ENCODE measurements at regions of chr6 and their contacts with region 1.

Region 1: DNA sequence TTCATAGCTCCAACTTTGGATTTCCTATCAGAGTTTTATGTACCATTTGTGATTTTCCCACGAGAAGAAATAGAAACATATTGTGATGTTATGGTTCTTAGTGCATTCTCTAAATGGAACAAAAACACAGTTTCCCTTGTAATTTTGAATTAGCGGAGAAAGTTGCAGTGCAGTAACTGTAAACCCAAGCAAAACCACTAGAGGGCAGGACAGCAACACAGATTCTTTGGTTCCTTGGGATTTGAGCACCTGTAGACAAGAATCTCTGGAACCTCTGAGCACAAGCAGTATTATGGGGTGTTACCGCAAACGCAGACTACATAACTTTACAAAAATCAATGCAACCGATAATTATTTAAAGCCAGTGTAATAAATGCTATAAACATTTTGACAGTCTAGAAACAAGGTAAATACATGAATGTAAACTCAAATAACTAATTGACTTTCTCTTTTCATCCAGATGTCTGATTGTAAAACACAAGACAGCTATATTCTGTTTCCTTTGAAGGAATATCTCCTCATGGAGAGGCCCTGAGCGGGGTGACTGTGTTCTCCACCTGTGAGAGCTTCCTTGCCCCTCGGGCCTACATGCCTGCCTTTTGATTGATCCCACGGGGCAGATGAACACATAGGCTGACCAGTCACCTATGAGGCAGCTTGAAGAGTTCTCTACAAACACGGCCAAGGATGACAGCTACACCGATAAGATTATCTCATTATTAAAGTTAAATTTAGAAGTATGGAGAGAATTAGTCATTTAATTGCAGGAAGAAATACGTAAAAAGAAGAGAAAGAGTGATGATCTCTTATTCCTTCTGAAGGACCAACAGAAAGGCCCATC is 67.5 kb upstream of the COL21A1 start:
- DNase-seq: no peak
- H3K4me3 ChIP-seq: no peak overlapping the region
- CTCF ChIP-seq: peak; percentile 75

Region 2: GRCh38 chr6:56329271-56330050 is 14.6 kb after region 1 on chr6:
- CTCF ChIA-PET with region 1: interaction called, 38 read pairs
- POLR2A ChIA-PET with region 1: no interaction called
- DNase-seq: no peak
- H3K4me3 ChIP-seq: no peak overlapping the region
- CTCF ChIP-seq: no peak

Region 3: GRCh38 chr6:56335726-56336125 is 20.8 kb after region 1 on chr6:
- CTCF ChIA-PET with region 1: interaction called, 13 read pairs
- POLR2A ChIA-PET with region 1: no interaction called
- DNase-seq: peak; percentile 60
- H3K4me3 ChIP-seq: no peak overlapping the region
- CTCF ChIP-seq: no peak

Region 4: DNA sequence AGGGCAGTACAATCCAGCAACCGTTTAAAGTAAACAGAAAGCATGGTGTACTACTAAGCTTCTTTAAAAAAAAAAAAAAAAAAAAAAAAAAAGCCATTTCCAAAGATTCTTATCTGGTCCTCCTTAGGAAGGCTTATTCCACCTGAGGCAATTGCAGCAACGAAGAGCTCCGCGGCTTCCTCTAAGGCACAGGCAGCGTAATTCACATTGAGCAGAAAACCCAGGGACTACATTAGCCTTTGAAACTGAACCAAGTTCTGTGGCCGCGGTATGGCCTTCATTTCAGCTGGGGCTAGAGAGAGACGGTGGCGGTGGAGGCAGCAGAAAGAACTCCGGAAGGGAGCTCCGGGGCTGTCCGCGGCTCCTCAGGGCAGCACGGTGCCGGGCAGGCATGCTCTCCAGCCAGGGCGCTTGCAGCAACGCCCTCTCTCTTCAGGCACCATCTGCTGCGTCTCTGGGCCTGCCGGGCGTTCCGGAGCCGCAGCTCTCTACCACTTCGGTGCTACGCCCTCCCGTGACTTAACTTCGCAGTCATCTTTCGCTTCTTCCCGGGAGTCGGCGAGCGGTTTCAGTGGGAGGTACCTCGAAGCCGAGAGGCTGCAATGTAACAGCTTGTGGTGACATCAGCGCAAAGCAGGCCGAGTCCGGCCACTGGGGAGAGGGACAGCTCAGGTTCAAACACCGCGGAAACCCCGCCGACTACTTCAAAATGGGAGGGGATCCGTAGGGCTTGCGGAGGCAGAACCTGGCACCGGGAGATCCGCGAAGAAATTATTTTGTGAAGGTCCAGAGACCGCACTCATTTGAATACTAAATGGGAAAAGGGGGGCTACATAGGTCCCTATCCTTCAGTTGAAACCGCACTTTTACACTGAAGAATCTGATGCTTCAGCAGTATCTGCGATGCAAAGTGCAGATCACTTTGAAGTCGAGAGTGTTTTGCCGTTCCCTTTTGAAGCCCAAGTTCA is 227.7 kb after region 1 on chr6:
- CTCF ChIA-PET with region 1: interaction called, 14 read pairs
- POLR2A ChIA-PET with region 1: no interaction called
- DNase-seq: peak; percentile 89
- H3K4me3 ChIP-seq: peak overlapping the region; percentile 63
- CTCF ChIP-seq: peak; percentile 31

Region 5: DNA sequence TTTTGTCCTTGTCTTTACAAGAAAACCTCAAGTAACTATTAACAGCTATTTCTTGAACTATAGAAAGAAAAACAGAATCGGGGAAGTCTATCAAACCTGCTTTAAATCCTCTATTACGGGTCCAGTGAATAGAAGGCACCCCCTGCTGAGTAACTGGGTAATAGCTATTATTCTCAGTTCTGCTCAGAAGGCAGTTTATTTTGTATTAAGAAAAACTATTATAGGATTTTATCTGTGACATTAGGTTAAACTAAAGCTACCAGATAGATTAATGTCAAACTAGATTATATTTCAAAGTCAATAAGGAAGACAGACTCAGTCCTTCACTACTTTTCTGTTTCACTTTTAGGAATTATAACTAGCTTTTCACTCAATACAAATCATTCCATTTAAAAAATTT is 234.1 kb after region 1 on chr6:
- CTCF ChIA-PET with region 1: interaction called, 14 read pairs
- POLR2A ChIA-PET with region 1: no interaction called
- DNase-seq: no peak
- H3K4me3 ChIP-seq: no peak overlapping the region
- CTCF ChIP-seq: peak; percentile 11

Measured in AG04449 (cell line).